Naive thymus-derived CD4-positive, alpha-beta T cell (primary cell): ENCODE measurements at regions of chr4 and their contacts with region 1.

Region 1: DNA sequence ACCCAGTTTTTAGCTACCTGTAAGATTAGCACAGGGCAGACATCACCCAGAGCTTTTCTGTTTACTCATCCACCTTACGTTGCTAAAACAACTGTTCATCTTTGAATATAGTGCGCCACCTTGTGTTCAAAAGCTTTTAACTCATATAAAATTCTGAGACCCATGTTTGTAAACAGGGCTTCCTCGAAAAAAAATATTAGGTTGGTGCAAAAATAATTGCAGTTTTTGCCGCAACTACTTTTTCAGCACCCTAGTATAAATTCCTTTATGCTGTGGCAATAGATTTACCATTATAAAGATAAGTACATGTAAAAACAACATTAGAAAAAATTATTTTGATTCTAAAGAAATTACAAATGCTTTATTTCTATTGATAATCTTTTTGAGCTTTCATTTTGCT is 147.9 kb downstream of the LRBA start:
- DNase-seq: peak in 7 of 9 donors; percentile 50 to 69 (median 64)
- ATAC-seq: peak; percentile 94
- H3K4me3 ChIP-seq: no peak overlapping the region
- H3K4me3 Mint-ChIP-seq: no peak overlapping the region
- H3K27ac ChIP-seq: no peak overlapping the region
- H3K27ac Mint-ChIP-seq: no peak overlapping the region
- H3K4me1 ChIP-seq: no peaks in the 10 kb centered on the region
- H3K4me1 Mint-ChIP-seq: no peaks in the 10 kb centered on the region
- H3K27me3 ChIP-seq: no peaks in the 10 kb centered on the region
- H3K27me3 Mint-ChIP-seq: no peaks in the 10 kb centered on the region

Region 2: DNA sequence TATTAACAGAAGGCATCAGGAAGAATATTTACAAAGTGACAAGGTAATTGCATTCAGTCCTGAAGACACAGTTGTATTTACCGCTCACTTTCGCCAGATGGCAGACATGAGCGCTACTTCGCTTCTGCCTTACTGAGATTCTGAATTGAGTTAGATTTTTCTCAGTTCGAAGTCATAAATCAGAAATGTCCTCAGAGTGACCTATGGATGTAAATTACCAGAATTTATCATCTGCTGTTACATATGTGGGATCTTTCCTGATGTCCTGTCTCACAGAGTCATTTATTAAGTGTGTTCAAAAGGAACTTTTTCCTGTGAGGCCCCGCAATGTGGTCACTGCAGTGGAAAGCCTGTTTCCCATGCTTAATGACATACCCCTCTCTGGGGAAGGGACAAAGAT is 886.2 kb before region 1 on chr4:
- CTCF ChIA-PET with region 1: interaction called, 6 read pairs
- POLR2A ChIA-PET with region 1: no interaction called
- intact Hi-C with region 1: loop called (anchors 1 kb)
- DNase-seq: peak in 6 of 9 donors; percentile 25 to 33 (median 28)
- ATAC-seq: peak; percentile 57
- H3K4me3 ChIP-seq: no peak overlapping the region
- H3K4me3 Mint-ChIP-seq: no peak overlapping the region
- H3K27ac ChIP-seq: no peak overlapping the region
- H3K27ac Mint-ChIP-seq: no peak overlapping the region
- H3K4me1 ChIP-seq: no peaks in the 10 kb centered on the region
- H3K4me1 Mint-ChIP-seq: peaks cover 0 to 12% (median 0%) of the 10 kb centered on the region in 7 donors
- H3K27me3 ChIP-seq: no peaks in the 10 kb centered on the region
- H3K27me3 Mint-ChIP-seq: peaks cover 0 to 12% (median 8%) of the 10 kb centered on the region in 5 donors

Region 3: DNA sequence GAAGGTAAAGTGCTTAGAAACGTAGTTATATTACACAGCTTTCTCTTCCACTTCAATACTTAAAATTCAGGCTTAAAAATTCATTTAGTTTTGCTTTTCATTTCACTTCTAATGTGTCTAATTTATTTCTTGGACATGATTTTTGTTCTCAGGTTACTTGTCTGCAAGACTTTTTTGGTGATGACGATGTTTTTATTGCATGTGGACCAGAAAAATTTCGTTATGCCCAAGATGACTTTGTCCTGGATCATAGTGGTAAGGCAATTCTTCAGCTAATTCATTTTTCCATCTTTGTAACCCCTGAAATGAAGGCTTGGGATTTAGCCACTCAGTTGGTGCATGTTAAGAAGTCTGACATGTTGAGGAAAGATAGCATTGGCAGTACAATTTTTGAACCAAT is 674.2 kb before region 1 on chr4:
- CTCF ChIA-PET with region 1: no interaction called
- POLR2A ChIA-PET with region 1: no interaction called
- intact Hi-C with region 1: no loop called
- DNase-seq: no peak
- ATAC-seq: no peak
- H3K4me3 ChIP-seq: no peak overlapping the region
- H3K4me3 Mint-ChIP-seq: no peak overlapping the region
- H3K27ac ChIP-seq: no peak overlapping the region
- H3K27ac Mint-ChIP-seq: no peak overlapping the region
- H3K4me1 ChIP-seq: no peaks in the 10 kb centered on the region
- H3K4me1 Mint-ChIP-seq: no peaks in the 10 kb centered on the region
- H3K27me3 ChIP-seq: no peaks in the 10 kb centered on the region
- H3K27me3 Mint-ChIP-seq: peaks cover 0 to 3% (median 0%) of the 10 kb centered on the region in 5 donors

Region 4: GRCh38 chr4:150242820-150243458 is 624.2 kb before region 1 on chr4:
- CTCF ChIA-PET with region 1: no interaction called
- POLR2A ChIA-PET with region 1: no interaction called
- intact Hi-C with region 1: loop called in 1 of 2 experiments (anchors 5 kb)
- DNase-seq: no peak
- ATAC-seq: no peak
- H3K4me3 ChIP-seq: no peak overlapping the region
- H3K4me3 Mint-ChIP-seq: no peak overlapping the region
- H3K27ac ChIP-seq: no peak overlapping the region
- H3K27ac Mint-ChIP-seq: no peak overlapping the region
- H3K4me1 ChIP-seq: no peaks in the 10 kb centered on the region
- H3K4me1 Mint-ChIP-seq: no peaks in the 10 kb centered on the region
- H3K27me3 ChIP-seq: no peaks in the 10 kb centered on the region
- H3K27me3 Mint-ChIP-seq: peaks cover 0 to 17% (median 4%) of the 10 kb centered on the region in 5 donors

Region 5: GRCh38 chr4:150389896-150390530 is 477.1 kb before region 1 on chr4:
- CTCF ChIA-PET with region 1: no interaction called
- POLR2A ChIA-PET with region 1: no interaction called
- intact Hi-C with region 1: no loop called
- DNase-seq: no peak
- ATAC-seq: no peak
- H3K4me3 ChIP-seq: no peak overlapping the region
- H3K4me3 Mint-ChIP-seq: no peak overlapping the region
- H3K27ac ChIP-seq: no peak overlapping the region
- H3K27ac Mint-ChIP-seq: no peak overlapping the region
- H3K4me1 ChIP-seq: no peaks in the 10 kb centered on the region
- H3K4me1 Mint-ChIP-seq: peaks cover 0 to 4% (median 0%) of the 10 kb centered on the region in 7 donors
- H3K27me3 ChIP-seq: no peaks in the 10 kb centered on the region
- H3K27me3 Mint-ChIP-seq: no peaks in the 10 kb centered on the region

Region 6: DNA sequence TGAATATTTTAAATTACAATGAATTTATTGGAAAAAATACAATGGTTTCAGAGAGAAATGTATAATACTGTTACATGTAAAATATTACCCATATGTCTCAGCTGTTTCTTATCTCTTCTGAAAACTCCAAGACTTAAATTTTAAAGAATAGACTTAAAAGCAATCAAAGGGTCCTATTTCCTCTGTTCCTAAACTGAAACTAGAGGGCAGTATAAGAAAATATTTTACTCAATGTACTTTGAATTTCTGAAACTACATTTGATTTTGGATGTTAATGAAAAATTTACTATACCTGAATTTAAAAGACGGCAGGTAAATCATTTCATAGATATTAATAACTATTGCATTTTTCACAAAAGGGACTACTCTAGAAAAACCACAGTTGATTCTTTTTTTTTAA is 52.3 kb before region 1 on chr4:
- CTCF ChIA-PET with region 1: interaction called, 3 read pairs
- POLR2A ChIA-PET with region 1: no interaction called
- intact Hi-C with region 1: loop called in 1 of 2 experiments (anchors 2 kb)
- DNase-seq: no peak
- ATAC-seq: no peak
- H3K4me3 ChIP-seq: no peak overlapping the region
- H3K4me3 Mint-ChIP-seq: no peak overlapping the region
- H3K27ac ChIP-seq: no peak overlapping the region
- H3K27ac Mint-ChIP-seq: no peak overlapping the region
- H3K4me1 ChIP-seq: no peaks in the 10 kb centered on the region
- H3K4me1 Mint-ChIP-seq: peaks cover 0 to 9% (median 4%) of the 10 kb centered on the region in 7 donors
- H3K27me3 ChIP-seq: no peaks in the 10 kb centered on the region
- H3K27me3 Mint-ChIP-seq: no peaks in the 10 kb centered on the region

Region 7: DNA sequence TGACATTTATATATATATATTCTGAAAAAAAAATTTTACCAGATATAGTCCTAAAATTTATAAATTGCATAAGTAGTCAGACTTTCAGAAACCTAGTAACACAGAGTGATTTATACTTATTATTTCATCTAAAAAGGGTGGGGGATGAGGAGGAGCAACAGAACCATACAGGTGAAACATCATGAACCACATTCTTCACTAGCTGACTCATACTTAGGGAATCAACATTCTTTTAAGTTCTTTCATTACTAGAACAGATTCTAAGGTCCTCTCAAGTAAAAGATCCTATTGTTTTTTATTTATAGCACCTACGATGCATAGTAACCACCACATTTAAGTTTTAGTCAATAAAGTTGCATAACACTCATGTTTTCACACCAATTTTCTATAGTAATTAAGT is 18.1 kb before region 1 on chr4:
- CTCF ChIA-PET with region 1: interaction called, 10 read pairs
- POLR2A ChIA-PET with region 1: no interaction called
- intact Hi-C with region 1: no loop called
- DNase-seq: no peak
- ATAC-seq: no peak
- H3K4me3 ChIP-seq: no peak overlapping the region
- H3K4me3 Mint-ChIP-seq: no peak overlapping the region
- H3K27ac ChIP-seq: no peak overlapping the region
- H3K27ac Mint-ChIP-seq: no peak overlapping the region
- H3K4me1 ChIP-seq: no peaks in the 10 kb centered on the region
- H3K4me1 Mint-ChIP-seq: peaks cover 0 to 10% (median 5%) of the 10 kb centered on the region in 7 donors
- H3K27me3 ChIP-seq: no peaks in the 10 kb centered on the region
- H3K27me3 Mint-ChIP-seq: no peaks in the 10 kb centered on the region